Endothelial cell of umbilical vein (primary cell): ENCODE measurements at regions of chr21 and their contacts with region 1.

Region 1: GRCh38 chr21:44911389-44912157 is 9.1 kb downstream of the ITGB2 start:
- DNase-seq: peak; percentile 71
- H3K4me3 ChIP-seq: no peak overlapping the region
- H3K27ac ChIP-seq: no peak overlapping the region
- H3K4me1 ChIP-seq: peaks cover 25% of the 10 kb centered on the region
- H3K27me3 ChIP-seq: no peaks in the 10 kb centered on the region
- CTCF ChIP-seq: peak; percentile 85
- POLR2A ChIP-seq: no peak

Region 2: DNA sequence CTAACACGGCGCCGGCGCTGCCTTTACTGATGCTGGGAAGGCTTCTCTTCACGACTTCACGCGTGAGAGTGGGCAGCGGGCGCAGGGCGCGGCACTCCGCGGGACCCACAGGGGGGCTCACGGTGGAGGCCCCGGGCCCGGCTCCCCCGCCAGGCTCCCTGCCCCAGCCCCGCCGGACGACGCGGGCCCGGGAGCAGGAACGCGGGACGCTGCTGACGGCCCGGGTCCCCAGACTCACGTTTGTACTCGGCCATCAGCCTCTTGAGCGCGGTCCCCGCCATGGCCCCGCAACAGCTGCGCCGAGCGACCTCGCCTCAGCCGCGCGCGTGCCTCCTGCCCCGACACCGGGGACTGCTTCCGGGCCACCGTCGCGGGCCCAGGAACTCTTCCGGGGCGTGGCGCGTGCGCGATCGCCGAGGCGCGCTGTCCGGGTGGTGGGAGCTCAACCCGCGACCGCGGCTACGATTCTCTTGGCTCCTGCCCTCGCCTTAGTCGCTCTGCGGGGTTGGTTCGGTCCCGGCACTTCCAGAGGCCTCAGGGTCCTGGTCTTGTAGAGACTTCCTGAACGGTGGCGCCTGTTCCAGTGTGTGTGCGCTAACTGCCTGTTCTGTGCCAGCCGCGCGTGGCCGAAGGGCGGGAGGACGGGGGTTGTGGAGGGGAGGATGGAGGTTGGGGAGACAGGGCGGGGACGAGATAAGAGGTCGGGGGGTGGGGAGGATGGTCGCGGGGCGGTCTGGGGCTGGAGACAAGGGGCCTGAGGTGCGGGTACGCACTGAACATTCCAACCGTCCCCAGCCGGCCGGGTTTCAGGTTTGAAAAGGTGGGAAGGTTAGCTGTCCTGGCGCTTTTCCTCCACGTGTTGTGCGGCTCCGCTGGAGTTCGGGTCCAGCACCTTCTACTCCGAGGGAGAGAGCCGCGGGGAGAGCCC is 109.8 kb before region 1 on chr21 and contains the start of gene UBE2G2:
- CTCF ChIA-PET with region 1: interaction called, 25 read pairs
- POLR2A ChIA-PET with region 1: no interaction called
- dilution Hi-C with region 1: no loop called
- intact Hi-C with region 1: loop called (anchors 1 kb)
- DNase-seq: peak; percentile 80
- H3K4me3 ChIP-seq: peak within 1 kb of the TSS; percentile 57 to 97 (median 94)
- H3K27ac ChIP-seq: peak within 1 kb of the TSS; percentile 54
- H3K4me1 ChIP-seq: peaks cover 20% of the 10 kb centered on the region
- H3K27me3 ChIP-seq: no peaks in the 10 kb centered on the region
- CTCF ChIP-seq: no peak
- POLR2A ChIP-seq: peak; percentile 74
- total RNA-seq, gene UBE2G2: 114 and 117 TPM in 2 replicates

Region 3: GRCh38 chr21:44845399-44846223 is 66.0 kb before region 1 on chr21:
- CTCF ChIA-PET with region 1: interaction called, 7 read pairs
- POLR2A ChIA-PET with region 1: no interaction called
- dilution Hi-C with region 1: no loop called
- intact Hi-C with region 1: loop called (anchors 1 kb)
- DNase-seq: peak; percentile 68
- H3K4me3 ChIP-seq: peak overlapping the region; percentile 7 to 28 (median 11)
- H3K27ac ChIP-seq: no peak overlapping the region
- H3K4me1 ChIP-seq: peaks cover 16% of the 10 kb centered on the region
- H3K27me3 ChIP-seq: peaks cover 2 to 4% of the 10 kb centered on the region in 2 experiments
- CTCF ChIP-seq: peak; percentile 22 to 53
- POLR2A ChIP-seq: no peak

Region 4: DNA sequence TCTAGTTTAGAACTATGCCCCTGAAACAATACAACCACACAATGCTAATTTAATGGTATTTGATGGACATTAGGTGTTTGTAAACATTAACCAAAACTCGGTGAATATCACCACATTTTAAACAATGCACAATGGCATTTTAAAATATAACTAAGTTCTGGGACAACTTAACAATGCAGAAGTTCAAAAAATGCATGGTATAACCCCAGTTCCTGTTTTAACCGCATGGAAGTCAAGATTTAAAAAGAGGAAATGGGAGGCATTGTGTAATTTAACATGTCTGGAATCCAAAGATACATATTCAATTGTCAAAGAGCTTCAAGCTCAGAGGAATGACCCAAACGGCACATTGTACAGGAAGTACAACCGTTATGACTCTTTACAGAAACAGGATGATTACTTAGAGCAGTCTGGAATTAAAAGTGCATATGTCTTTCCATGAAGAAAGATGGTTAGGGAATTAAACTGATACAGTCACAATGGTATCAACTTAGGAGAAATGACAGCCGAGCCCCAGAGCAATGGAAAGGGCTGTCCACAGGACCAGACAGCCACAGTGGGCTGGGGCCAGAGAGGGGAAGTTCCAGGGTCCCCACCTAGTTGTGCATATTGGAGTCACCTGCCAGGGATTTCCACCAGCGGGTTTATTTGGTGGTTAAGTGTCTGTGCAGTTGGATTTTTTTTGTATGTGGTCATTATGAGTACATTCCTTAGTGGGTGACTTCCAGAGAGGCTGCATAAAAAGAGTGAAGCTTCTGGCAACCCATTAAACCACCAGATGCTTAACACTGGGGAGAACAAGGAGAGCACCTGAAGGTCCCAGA is 30.6 kb before region 1 on chr21:
- CTCF ChIA-PET with region 1: interaction called, 6 read pairs
- POLR2A ChIA-PET with region 1: no interaction called
- dilution Hi-C with region 1: no loop called
- intact Hi-C with region 1: loop called (anchors 1 kb)
- DNase-seq: peak; percentile 94
- H3K4me3 ChIP-seq: no peak overlapping the region
- H3K27ac ChIP-seq: peak overlapping the region; percentile 98
- H3K4me1 ChIP-seq: peaks cover 45% of the 10 kb centered on the region
- H3K27me3 ChIP-seq: no peaks in the 10 kb centered on the region
- CTCF ChIP-seq: no peak
- POLR2A ChIP-seq: peak; percentile 35

Region 5: DNA sequence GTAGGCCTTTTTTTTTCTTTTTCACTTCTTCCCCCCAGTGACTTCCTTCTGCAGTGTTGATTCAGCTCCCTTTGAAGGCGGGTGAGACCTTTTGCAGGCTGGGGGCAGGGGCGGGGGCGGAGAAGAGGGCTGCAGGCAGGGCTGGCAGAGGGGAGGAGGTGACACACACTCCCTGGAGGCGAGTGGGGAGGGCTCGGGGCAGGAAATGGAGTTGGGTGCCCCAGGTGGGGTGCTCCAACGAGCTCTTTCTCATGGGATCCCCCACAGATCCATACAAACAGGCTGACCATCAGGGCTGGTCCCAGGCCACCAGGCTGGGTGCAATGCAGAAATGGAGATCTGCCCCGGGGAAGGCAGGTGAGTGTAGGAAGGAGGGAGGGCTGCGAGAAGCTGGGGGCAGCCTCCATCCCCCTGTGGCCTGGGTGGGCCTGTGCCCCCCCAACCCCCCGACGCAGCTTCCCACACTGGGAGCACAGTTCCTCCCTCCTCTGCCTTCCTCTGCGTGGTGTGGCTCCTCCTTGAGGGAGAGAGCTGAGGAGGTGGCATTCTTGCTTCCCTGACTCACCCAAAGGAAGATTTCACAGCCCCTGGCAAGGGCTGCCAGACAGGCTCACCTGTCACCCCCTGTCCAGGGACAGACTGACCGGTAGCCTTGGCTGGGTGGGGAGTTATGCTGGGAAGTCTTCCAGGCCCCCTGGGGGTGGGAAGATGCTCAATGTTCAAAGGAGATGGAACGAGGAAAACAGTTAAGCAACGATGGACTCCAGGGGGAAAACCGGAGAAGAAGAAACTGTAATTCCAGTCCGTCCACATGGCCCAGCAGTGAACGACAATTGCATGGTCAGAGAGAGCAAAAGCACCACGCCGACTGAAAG is 16.3 kb after region 1 on chr21:
- CTCF ChIA-PET with region 1: interaction called, 16 read pairs
- POLR2A ChIA-PET with region 1: no interaction called
- dilution Hi-C with region 1: no loop called
- intact Hi-C with region 1: no loop called
- DNase-seq: no peak
- H3K4me3 ChIP-seq: no peak overlapping the region
- H3K27ac ChIP-seq: no peak overlapping the region
- H3K4me1 ChIP-seq: peaks cover 31% of the 10 kb centered on the region
- H3K27me3 ChIP-seq: peaks cover 7 to 16% of the 10 kb centered on the region in 2 experiments
- CTCF ChIP-seq: no peak
- POLR2A ChIP-seq: no peak

Region 6: DNA sequence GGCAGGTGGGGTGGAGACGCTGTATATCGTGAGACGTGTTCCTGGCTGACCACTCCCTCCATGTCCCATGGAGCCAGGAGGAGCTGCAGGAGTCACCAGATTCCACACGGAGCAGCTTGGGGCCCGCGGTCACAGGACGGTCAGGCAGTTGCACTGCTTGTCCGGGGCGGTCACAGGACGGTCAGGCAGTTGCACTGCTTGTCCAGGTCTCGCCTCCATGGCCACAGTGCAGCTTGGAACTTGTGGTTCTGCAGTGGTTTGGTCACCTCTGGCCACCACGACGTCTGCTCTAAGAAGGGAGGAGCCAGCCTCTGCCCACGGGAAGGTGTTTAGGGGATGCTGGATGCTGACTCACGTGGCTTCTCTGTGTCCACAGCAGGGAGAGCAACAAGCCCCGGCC is 61.2 kb after region 1 on chr21:
- CTCF ChIA-PET with region 1: no interaction called
- POLR2A ChIA-PET with region 1: no interaction called
- dilution Hi-C with region 1: no loop called
- intact Hi-C with region 1: no loop called
- DNase-seq: no peak
- H3K4me3 ChIP-seq: no peak overlapping the region
- H3K27ac ChIP-seq: no peak overlapping the region
- H3K4me1 ChIP-seq: peaks cover 12% of the 10 kb centered on the region
- H3K27me3 ChIP-seq: no peaks in the 10 kb centered on the region
- CTCF ChIP-seq: no peak
- POLR2A ChIP-seq: no peak